ENCODE measurements at regions of chr2 and their contacts with region 1.

Region 1: DNA sequence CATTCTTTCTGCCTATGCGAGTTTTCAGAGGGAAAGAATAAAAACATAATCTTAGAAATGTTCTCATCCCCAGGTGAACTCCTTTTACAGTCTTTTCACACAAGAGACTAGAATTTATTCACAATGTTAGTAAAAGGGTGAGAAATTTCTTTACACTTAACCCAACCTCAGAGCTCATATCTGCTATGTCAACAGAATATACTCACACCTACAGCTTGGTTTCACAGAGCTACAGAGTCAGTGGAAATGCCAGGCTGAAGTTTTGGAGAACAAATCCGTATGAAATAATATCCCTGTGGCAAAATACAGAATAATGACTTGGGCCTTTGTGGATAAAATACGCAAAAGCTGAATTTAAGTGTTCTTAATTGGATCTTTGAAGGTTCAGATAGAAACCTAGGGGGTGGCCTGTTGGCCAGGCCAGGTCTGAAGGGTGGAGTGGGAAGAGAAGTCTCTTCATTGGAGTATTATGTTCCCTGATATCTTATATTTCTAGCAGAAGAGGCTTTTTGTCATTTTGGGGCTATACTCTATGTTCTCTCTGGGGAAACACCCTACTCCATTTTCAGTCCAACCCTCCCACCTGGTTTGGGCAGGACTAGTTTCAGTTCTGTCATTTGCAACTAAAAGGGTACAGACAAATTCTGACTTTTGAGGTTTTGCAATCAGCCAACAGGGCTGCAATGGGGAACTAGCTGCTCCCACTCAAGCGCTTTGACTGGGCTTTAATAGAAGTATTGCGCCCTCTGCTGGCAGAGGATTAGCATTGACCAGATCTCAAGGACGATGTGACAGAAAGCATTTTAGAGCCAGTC is 25.7 kb downstream of the FBXO48 start:
- DNase-seq: peak; percentile 97
- ATAC-seq: peak; percentile 96
- H3K4me3 ChIP-seq: peak overlapping the region; percentile 40; the same call in 1 of the 2 replicates
- H3K27ac ChIP-seq: peak overlapping the region; percentile 92
- H3K4me1 ChIP-seq: peaks cover 33% of the 10 kb centered on the region
- H3K27me3 ChIP-seq: no peaks in the 10 kb centered on the region
- CTCF ChIP-seq: peak; percentile 76 to 93 (median 89)
- EP300 ChIP-seq: peak; percentile 75 to 86; a peak in 3 of 4 replicates
- POLR2A ChIP-seq: no peak
- RAD21 ChIP-seq: peak; percentile 100

Region 2: GRCh38 chr2:68121873-68122679 is 319.3 kb before region 1 on chr2:
- CTCF ChIA-PET with region 1: interaction called, 38 read pairs
- POLR2A ChIA-PET with region 1: interaction called, 5 read pairs
- RAD21 ChIA-PET with region 1: interaction called, 18 read pairs
- SMC1A ChIA-PET with region 1: interaction called, 43 read pairs
- in situ Hi-C with region 1: loop called (anchors 5 kb)
- intact Hi-C with region 1: loop called (anchors 1 kb)
- DNase-seq: peak; percentile 50
- ATAC-seq: peak; percentile 23; the same call in 2 of the 3 replicates
- H3K4me3 ChIP-seq: peak overlapping the region; percentile 56; the same call in 1 of the 2 replicates
- H3K27ac ChIP-seq: peak overlapping the region; percentile 85
- H3K4me1 ChIP-seq: peaks cover 35% of the 10 kb centered on the region
- H3K27me3 ChIP-seq: no peaks in the 10 kb centered on the region
- CTCF ChIP-seq: peak; percentile 93 to 97 (median 96)
- EP300 ChIP-seq: no peak
- POLR2A ChIP-seq: no peak
- RAD21 ChIP-seq: peak; percentile 97

Region 3: GRCh38 chr2:68203587-68203986 is 237.8 kb before region 1 on chr2:
- CTCF ChIA-PET with region 1: interaction called, 3 read pairs
- POLR2A ChIA-PET with region 1: no interaction called
- RAD21 ChIA-PET with region 1: interaction called, 3 read pairs
- SMC1A ChIA-PET with region 1: interaction called, 3 read pairs
- in situ Hi-C with region 1: loop called (anchors 10 kb)
- intact Hi-C with region 1: loop called (anchors 5 kb)
- DNase-seq: peak; percentile 84
- ATAC-seq: peak; percentile 96
- H3K4me3 ChIP-seq: peak overlapping the region; percentile 51; the same call in 1 of the 2 replicates
- H3K27ac ChIP-seq: peak overlapping the region; percentile 72
- H3K4me1 ChIP-seq: peaks cover 27% of the 10 kb centered on the region
- H3K27me3 ChIP-seq: no peaks in the 10 kb centered on the region
- CTCF ChIP-seq: no peak
- EP300 ChIP-seq: peak; percentile 73 to 74; a peak in 3 of 4 replicates
- POLR2A ChIP-seq: no peak
- RAD21 ChIP-seq: no peak

Region 4: GRCh38 chr2:68295516-68295915 is 145.9 kb before region 1 on chr2:
- CTCF ChIA-PET with region 1: interaction called, 15 read pairs
- POLR2A ChIA-PET with region 1: interaction called, 3 read pairs
- RAD21 ChIA-PET with region 1: interaction called, 20 read pairs
- SMC1A ChIA-PET with region 1: interaction called, 19 read pairs
- in situ Hi-C with region 1: loop called (anchors 5 kb)
- intact Hi-C with region 1: loop called (anchors 5 kb)
- DNase-seq: no peak
- ATAC-seq: peak; percentile 79
- H3K4me3 ChIP-seq: no peak overlapping the region
- H3K27ac ChIP-seq: no peak overlapping the region
- H3K4me1 ChIP-seq: peaks cover 6% of the 10 kb centered on the region
- H3K27me3 ChIP-seq: no peaks in the 10 kb centered on the region
- CTCF ChIP-seq: no peak
- EP300 ChIP-seq: no peak
- POLR2A ChIP-seq: no peak
- RAD21 ChIP-seq: no peak

Region 5: DNA sequence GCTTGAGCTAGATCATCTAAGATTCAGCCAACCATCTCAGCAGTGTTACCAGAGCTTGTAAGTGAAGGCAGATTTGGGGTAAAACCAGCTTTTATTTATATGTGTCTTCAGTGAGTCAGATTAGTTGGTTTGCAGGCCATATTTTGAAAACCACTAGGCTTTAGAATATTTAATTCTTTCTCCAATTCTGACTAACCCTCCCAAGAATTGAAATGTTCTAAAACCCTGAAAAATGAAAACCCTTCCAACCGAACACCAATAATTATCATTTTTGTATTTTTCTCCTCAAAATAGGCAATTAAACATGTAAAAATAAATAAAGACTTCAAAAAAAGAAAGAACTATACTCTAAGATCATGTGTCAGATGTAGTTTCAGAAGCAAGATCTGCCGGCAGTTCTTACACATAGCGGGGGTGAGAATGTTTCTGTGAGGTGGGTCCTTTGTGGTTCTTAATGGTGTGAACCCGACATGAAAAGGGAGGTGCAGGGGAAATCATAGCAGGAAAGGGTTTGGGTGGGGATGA is 62.1 kb before region 1 on chr2:
- CTCF ChIA-PET with region 1: interaction called, 85 read pairs
- POLR2A ChIA-PET with region 1: interaction called, 14 read pairs
- RAD21 ChIA-PET with region 1: interaction called, 211 read pairs
- SMC1A ChIA-PET with region 1: interaction called, 259 read pairs
- in situ Hi-C with region 1: no loop called
- intact Hi-C with region 1: no loop called
- DNase-seq: no peak
- ATAC-seq: peak; percentile 55
- H3K4me3 ChIP-seq: peak overlapping the region; percentile 48; the same call in 1 of the 2 replicates
- H3K27ac ChIP-seq: peak overlapping the region; percentile 80
- H3K4me1 ChIP-seq: peaks cover 71% of the 10 kb centered on the region
- H3K27me3 ChIP-seq: no peaks in the 10 kb centered on the region
- CTCF ChIP-seq: no peak
- EP300 ChIP-seq: peak; percentile 60 to 73; a peak in 3 of 4 replicates
- POLR2A ChIP-seq: no peak
- RAD21 ChIP-seq: no peak

Region 6: GRCh38 chr2:68411397-68412126 is 29.8 kb before region 1 on chr2:
- CTCF ChIA-PET with region 1: interaction called, 87 read pairs
- POLR2A ChIA-PET with region 1: interaction called, 70 read pairs
- RAD21 ChIA-PET with region 1: interaction called, 147 read pairs
- SMC1A ChIA-PET with region 1: interaction called, 164 read pairs
- in situ Hi-C with region 1: no loop called
- intact Hi-C with region 1: loop called (anchors 1 kb)
- DNase-seq: peak; percentile 84
- ATAC-seq: peak; percentile 95
- H3K4me3 ChIP-seq: peak overlapping the region; percentile 39
- H3K27ac ChIP-seq: peak overlapping the region; percentile 85
- H3K4me1 ChIP-seq: peaks cover 15% of the 10 kb centered on the region
- H3K27me3 ChIP-seq: no peaks in the 10 kb centered on the region; a peak in 1 of 4 replicates
- CTCF ChIP-seq: no peak
- EP300 ChIP-seq: peak in 1 of 2 experiments; percentile 41; a peak in 2 of 4 replicates
- POLR2A ChIP-seq: no peak
- RAD21 ChIP-seq: peak; percentile 22; the same call in 1 of the 2 replicates

Region 7: DNA sequence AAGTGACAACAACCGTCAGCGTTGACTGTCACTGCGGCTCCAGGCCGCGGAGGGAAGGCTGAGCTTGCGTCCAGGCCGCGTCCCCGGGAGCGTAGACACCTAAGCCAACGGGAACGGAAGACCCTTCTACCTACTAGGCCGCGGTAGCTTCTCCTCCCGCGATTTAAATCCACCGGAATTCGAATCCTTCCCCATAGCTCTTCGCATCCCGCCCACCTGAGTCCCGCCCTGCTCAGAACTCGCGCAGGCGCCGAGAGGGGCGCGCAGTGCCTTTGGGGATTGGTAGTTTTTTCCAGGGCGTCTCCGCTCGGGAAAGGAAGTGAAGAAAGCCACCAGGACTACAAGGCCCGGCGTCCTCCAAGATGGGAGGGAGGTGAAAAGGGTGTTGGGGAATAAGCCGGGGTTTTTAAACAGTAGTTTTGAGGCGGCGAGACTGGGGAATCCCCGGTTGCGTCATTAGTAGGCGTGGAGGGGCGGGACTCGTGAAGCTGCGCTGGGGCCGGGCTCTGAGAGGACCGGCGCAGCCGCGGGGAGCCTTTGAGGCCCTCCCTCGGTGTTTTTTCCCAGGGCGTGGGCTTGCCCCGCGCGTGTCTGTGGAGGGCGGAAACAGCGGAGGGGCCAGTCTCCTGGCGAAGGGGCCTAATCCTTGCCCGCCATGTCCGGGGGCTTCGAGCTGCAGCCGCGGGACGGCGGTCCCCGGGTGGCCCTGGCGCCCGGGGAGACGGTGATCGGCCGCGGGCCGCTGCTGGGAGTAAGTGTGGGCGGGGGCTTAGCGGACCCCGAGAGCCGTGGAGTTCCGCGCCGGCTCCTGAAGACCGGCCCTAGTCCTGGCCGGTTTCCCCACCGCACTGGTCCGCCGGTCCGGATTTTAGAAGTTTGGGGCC is 25.9 kb after region 1 on chr2 and contains the starts of genes APLF and FBXO48:
- CTCF ChIA-PET with region 1: interaction called, 14 read pairs
- POLR2A ChIA-PET with region 1: interaction called, 3 read pairs
- RAD21 ChIA-PET with region 1: interaction called, 17 read pairs
- SMC1A ChIA-PET with region 1: interaction called, 15 read pairs
- in situ Hi-C with region 1: no loop called
- intact Hi-C with region 1: no loop called
- DNase-seq: peak; percentile 95
- ATAC-seq: peak; percentile 96
- H3K4me3 ChIP-seq: peak within 1 kb of the TSS; percentile 80
- H3K27ac ChIP-seq: peak within 1 kb of the TSS; percentile 74
- H3K4me1 ChIP-seq: peaks cover 11% of the 10 kb centered on the region; the same call in 1 of the 2 replicates
- H3K27me3 ChIP-seq: no peaks in the 10 kb centered on the region
- CTCF ChIP-seq: no peak
- EP300 ChIP-seq: no peak
- POLR2A ChIP-seq: peak; percentile 77
- RAD21 ChIP-seq: no peak
- polyA plus RNA-seq, gene APLF: 0.66 to 0.69 TPM
- polyA plus RNA-seq, gene FBXO48: 0.90 to 1.1 TPM

Region 8: DNA sequence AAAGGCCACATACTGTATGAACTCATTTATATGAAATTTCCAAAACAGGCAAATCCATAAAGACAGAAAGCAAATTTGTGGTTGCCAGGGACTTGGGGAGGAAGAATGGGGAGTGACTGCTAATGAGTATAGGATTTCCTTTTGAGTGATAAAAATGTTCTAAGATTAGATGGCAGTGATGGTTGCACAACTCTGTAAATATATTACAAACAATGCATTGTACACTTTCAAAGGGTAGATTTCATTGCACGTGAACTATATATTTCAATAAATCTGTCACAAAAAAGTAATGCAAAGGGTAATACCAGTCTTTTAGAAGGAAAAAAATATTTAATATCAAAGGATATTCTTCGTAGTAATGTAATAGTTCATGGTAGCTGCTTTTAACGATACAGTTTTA is 138.3 kb after region 1 on chr2:
- CTCF ChIA-PET with region 1: no interaction called
- POLR2A ChIA-PET with region 1: no interaction called
- RAD21 ChIA-PET with region 1: no interaction called
- SMC1A ChIA-PET with region 1: no interaction called
- in situ Hi-C with region 1: no loop called
- intact Hi-C with region 1: no loop called
- DNase-seq: no peak
- ATAC-seq: no peak
- H3K4me3 ChIP-seq: no peak overlapping the region
- H3K27ac ChIP-seq: no peak overlapping the region
- H3K4me1 ChIP-seq: no peaks in the 10 kb centered on the region
- H3K27me3 ChIP-seq: no peaks in the 10 kb centered on the region
- CTCF ChIP-seq: no peak
- EP300 ChIP-seq: no peak
- POLR2A ChIP-seq: no peak
- RAD21 ChIP-seq: no peak

Measured in GM12878 (cell line).